ENCODE measurements at regions of chr2 and their contacts with region 1.

Region 1: GRCh38 chr2:218852911-218853667 is 6.5 kb upstream of the WNT6 start:
- DNase-seq: peak; percentile 50 to 68 (median 52)
- ATAC-seq: peak; percentile 86
- H3K4me3 ChIP-seq: no peak overlapping the region
- H3K27ac ChIP-seq: no peak overlapping the region
- H3K4me1 ChIP-seq: no peaks in the 10 kb centered on the region; a peak in 1 of 5 replicates
- H3K27me3 ChIP-seq: peaks cover 0 to 27% of the 10 kb centered on the region in 2 experiments; a peak in 2 of 5 replicates
- CTCF ChIP-seq: peak; percentile 74 to 89 (median 81)
- EP300 ChIP-seq: no peak
- POLR2A ChIP-seq: no peak
- RAD21 ChIP-seq: peak; percentile 78

Region 2: DNA sequence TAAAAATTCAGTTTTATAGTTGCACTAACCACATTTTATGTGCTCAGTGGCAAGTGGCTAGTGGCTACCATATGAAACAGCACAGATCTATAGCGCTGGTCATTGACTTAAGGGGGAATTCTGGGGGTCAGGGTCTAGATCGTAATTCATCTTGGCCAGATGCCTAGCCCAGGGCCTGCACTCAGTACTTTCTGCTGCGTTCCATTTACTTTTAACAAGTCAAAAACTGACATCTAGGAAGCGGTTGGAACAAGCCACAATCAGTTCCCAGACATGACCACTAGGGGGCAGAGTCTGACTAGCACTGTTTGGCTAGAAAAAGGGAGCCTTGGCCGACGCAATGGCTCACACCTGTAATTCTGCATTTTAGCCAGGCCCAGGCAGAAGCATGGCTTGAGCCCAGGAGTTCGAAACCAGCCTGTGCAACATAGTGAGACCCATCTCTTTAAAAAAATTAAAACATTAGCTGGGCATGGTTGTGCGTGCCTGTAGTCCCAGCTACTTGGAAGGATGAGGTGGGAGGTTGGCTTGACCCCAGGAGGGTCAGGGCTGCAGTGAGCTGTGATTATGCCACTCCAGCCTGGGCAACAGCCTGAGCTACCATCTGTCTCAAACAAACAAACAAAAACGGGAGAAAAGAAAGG is 551.8 kb before region 1 on chr2:
- CTCF ChIA-PET with region 1: no interaction called
- POLR2A ChIA-PET with region 1: no interaction called
- in situ Hi-C with region 1: no loop called
- intact Hi-C with region 1: loop called (anchors 5 kb)
- DNase-seq: peak; percentile 38 to 89 (median 47)
- ATAC-seq: peak; percentile 91
- H3K4me3 ChIP-seq: no peak overlapping the region
- H3K27ac ChIP-seq: peak overlapping the region; percentile 59
- H3K4me1 ChIP-seq: peaks cover 0 to 10% of the 10 kb centered on the region in 2 experiments; a peak in 3 of 5 replicates
- H3K27me3 ChIP-seq: no peaks in the 10 kb centered on the region
- CTCF ChIP-seq: peak; percentile 84 to 92 (median 86)
- EP300 ChIP-seq: no peak
- POLR2A ChIP-seq: no peak
- RAD21 ChIP-seq: peak; percentile 93 to 94

Region 3: DNA sequence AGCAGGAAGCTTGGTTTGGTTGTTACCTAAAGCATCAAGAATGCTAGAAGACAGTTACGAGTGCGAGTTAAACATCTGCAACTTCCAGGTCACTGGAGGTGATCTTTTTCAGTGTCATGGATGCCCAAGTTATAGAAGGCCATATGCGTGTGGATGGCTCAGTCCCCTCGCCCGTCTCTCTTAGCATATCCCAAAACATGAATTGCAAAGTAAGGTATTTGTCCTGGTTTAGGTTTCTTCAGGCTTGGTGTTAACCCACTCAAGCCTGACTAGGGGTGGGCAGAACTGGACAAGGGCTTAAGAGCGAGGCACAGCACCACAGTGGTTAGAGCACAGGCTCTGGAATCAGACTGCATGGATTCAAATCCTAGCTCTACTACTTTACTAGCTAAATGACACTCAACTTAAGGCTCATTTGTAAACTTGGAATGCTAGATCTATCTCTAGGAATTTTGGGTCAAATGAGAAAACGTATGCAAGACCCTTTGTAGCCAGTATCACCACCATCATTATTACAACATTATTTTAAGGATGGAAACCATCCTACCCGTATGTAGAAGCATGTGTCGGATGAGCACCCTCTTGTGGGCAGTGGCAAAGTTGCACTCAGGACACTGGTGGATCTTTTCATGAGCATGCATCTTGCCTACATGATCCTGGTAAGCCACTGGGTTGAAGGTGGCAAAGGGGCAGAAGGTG is 204.9 kb before region 1 on chr2:
- CTCF ChIA-PET with region 1: no interaction called
- POLR2A ChIA-PET with region 1: no interaction called
- in situ Hi-C with region 1: no loop called
- intact Hi-C with region 1: no loop called
- DNase-seq: peak; percentile 23 to 50 (median 44)
- ATAC-seq: peak; percentile 93
- H3K4me3 ChIP-seq: no peak overlapping the region
- H3K27ac ChIP-seq: no peak overlapping the region
- H3K4me1 ChIP-seq: no peaks in the 10 kb centered on the region
- H3K27me3 ChIP-seq: no peaks in the 10 kb centered on the region
- CTCF ChIP-seq: peak; percentile 62 to 82 (median 68)
- EP300 ChIP-seq: no peak
- POLR2A ChIP-seq: no peak
- RAD21 ChIP-seq: peak; percentile 33 to 51

Region 4: DNA sequence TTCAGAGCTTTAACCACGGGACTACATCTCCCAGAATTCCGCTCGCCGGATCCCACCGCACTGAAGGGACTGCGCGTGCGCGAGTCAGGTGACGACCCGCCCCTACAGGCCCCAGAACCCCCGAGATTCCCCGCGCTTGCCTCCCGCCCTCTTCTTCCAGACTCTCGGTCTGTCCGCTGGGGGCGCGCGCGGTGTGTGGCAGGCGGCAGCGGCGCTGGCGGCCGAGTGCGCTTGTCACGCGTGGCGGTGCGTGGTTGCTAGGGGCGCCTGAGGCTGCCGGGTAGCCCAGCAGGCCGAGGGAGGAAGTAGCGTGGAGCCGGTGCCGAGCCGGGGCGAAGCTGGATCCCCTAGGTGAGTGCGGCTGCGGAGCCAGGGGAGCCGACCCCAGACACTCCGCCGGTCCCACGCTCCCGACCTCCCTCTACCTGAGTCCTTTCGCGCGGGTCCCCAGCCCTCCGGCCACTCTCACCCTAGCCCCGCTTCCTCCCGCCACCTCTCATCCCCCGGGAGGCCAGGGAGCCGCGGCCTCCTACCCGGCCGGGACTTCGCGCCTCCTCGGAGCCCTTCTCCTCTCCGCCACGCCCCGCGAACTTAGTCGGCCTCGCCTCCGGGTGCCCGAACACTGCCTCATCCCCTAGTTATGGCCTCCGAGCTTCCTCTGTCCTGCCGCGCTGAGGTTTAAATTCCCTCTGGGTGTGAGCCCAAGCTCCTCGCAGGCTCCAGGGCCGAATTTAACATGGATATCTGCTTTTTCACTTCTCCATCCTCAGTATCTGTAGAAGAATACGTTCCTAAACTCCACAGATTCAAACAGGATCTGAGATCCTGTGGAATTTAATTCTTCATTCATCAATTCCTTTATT is 142.2 kb before region 1 on chr2 and contains the start of gene TTLL4:
- CTCF ChIA-PET with region 1: interaction called, 15 read pairs
- POLR2A ChIA-PET with region 1: interaction called, 3 read pairs
- in situ Hi-C with region 1: no loop called
- intact Hi-C with region 1: loop called (anchors 5 kb)
- DNase-seq: peak; percentile 96 to 98 (median 98)
- ATAC-seq: peak; percentile 98
- H3K4me3 ChIP-seq: peak within 1 kb of the TSS; percentile 85
- H3K27ac ChIP-seq: peak within 1 kb of the TSS; percentile 79
- H3K4me1 ChIP-seq: peaks cover 13 to 14% of the 10 kb centered on the region in 2 experiments
- H3K27me3 ChIP-seq: no peaks in the 10 kb centered on the region
- CTCF ChIP-seq: peak; percentile 71 to 89 (median 81)
- EP300 ChIP-seq: no peak
- POLR2A ChIP-seq: peak; percentile 79
- RAD21 ChIP-seq: peak; percentile 64 to 71
- polyA plus RNA-seq, gene TTLL4: 20.3 to 30.8 TPM

Region 5: DNA sequence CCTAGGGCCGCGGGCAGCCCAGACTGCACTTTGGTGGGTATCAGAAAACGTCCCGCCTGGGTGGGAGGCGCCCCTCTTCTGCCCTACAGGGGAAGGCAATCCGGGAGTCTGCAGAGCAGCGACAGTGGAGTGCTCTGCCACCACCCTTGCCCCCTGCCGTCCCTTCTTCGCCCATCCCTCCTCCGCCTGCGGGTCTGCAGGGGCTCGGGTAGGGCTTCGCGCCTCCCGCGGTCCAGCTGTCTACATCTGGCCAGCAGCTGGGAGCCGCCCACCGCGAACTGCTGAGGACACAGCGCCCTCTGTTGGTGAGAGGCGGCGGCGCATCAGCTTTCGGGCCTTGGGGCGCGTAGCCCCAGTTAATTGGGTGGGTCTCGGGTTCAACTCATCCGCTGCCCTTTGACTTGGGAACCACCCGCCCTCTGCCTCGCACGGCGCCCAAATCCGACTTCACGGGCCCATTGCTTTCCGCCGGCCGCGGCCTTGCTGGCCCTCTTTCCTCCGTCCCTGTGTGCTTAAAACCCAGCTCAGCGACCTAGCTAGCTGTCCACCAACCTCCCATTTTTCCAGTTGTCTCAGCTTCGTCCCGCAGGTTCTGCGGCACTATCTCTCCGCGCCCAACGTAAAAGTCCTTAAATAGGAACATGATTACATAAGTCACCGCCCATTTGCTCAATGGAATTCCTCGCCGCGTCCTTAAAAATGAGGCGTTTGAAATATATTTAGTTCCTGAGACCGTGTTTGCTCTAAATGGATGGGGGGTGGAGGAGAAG is 45.2 kb after region 1 on chr2:
- CTCF ChIA-PET with region 1: interaction called, 10 read pairs
- POLR2A ChIA-PET with region 1: interaction called, 4 read pairs
- in situ Hi-C with region 1: no loop called
- intact Hi-C with region 1: loop called (anchors 1 kb)
- DNase-seq: peak; percentile 72 to 81 (median 77)
- ATAC-seq: peak; percentile 96
- H3K4me3 ChIP-seq: no peak overlapping the region
- H3K27ac ChIP-seq: no peak overlapping the region
- H3K4me1 ChIP-seq: peaks cover 0 to 22% of the 10 kb centered on the region in 2 experiments; a peak in 2 of 5 replicates
- H3K27me3 ChIP-seq: peaks cover 0 to 24% of the 10 kb centered on the region in 2 experiments; a peak in 4 of 5 replicates
- CTCF ChIP-seq: peak; percentile 74 to 85 (median 77)
- EP300 ChIP-seq: no peak
- POLR2A ChIP-seq: no peak
- RAD21 ChIP-seq: peak; percentile 53 to 78

Region 6: GRCh38 chr2:218927422-218927821 is 74.3 kb after region 1 on chr2:
- CTCF ChIA-PET with region 1: no interaction called
- POLR2A ChIA-PET with region 1: no interaction called
- in situ Hi-C with region 1: no loop called
- intact Hi-C with region 1: no loop called
- DNase-seq: no peak
- ATAC-seq: no peak
- H3K4me3 ChIP-seq: no peak overlapping the region
- H3K27ac ChIP-seq: no peak overlapping the region
- H3K4me1 ChIP-seq: no peaks in the 10 kb centered on the region
- H3K27me3 ChIP-seq: peaks cover 0 to 3% of the 10 kb centered on the region in 2 experiments; a peak in 2 of 5 replicates
- CTCF ChIP-seq: no peak
- EP300 ChIP-seq: no peak
- POLR2A ChIP-seq: no peak
- RAD21 ChIP-seq: no peak

Region 7: DNA sequence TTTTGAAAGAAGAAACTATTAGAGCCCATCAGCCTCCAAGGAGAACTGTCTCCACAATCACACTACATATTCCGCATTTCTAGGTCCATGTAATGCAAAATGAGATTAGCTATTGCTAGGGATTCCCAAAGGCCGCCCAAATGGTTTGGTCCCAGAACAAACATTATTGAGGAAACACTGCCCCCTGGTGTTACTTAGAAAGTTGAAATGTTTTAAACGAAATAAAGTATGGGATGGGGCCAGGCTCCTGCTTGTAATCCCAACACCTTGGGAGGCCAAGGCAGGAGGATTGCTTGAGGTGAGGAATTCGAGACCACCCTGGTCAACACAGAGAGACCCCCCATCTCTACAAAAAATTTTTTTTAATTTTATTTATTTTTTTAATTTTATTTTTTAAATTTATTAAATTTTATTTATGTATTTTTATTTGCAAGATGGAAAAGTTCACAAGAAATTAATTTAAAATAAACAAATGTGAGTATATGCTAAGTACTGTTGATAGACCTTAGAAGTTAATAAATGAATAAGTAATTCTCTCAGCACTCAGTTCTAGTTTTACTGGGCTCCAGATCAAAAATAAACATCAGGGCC is 302.1 kb after region 1 on chr2:
- CTCF ChIA-PET with region 1: no interaction called
- POLR2A ChIA-PET with region 1: no interaction called
- in situ Hi-C with region 1: no loop called
- intact Hi-C with region 1: loop called (anchors 10 kb)
- DNase-seq: peak; percentile 39 to 81 (median 46)
- ATAC-seq: peak; percentile 82
- H3K4me3 ChIP-seq: no peak overlapping the region
- H3K27ac ChIP-seq: no peak overlapping the region
- H3K4me1 ChIP-seq: peaks cover 3 to 6% of the 10 kb centered on the region in 2 experiments; a peak in 3 of 5 replicates
- H3K27me3 ChIP-seq: no peaks in the 10 kb centered on the region
- CTCF ChIP-seq: peak; percentile 37 to 67 (median 59); a peak in 4 of 6 replicates
- EP300 ChIP-seq: no peak
- POLR2A ChIP-seq: no peak
- RAD21 ChIP-seq: peak; percentile 80 to 84

Measured in K562 (cell line).